AG04450 (cell line): ENCODE measurements at regions of chr9 and their contacts with region 1.

Region 1: GRCh38 chr9:115649991-115650472 is 503.6 kb upstream of the PAPPA start:
- DNase-seq: peak; percentile 87
- H3K4me3 ChIP-seq: peak overlapping the region; percentile 18
- H3K27ac ChIP-seq: peak overlapping the region; percentile 97
- H3K27me3 ChIP-seq: no peaks in the 10 kb centered on the region
- CTCF ChIP-seq: no peak

Region 2: DNA sequence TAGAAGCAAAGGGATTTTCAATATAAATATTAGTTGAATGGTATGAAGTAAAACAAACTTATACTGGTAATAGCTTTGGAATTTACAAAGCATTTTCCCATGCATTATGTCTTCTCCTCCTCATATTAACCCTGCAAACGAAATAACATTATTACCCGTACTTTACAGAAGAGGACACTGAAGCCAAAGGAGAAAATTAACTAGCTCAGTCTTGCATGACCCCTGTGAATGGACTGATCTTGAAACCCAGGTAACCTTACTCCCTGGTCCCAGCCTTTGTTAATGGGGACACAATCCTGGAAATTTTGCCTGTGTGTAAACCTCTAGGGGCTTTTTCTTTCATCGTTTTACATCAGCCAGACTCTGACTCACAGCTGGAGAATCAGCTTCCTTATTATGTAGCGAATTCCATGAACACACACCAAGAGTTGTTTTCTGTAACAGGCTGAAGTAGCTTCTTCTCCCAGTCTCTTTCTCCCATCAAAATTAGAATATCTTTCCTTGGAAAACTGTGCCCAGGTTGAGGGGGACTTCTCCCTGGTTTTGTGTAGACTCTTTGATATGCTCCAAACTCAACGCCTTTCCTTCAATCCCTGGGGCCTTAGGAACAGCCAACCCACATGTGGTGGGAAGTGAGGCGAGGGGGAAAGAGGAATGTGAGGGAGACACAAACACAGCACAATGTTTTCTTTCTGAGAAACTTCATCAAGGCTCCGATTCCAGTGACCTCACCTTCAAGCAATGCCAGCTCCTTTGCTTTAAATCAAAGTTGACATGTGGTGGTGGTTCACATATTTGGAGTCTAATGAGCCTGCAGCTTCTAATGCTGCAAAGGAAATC is 22.7 kb after region 1 on chr9:
- CTCF ChIA-PET with region 1: no interaction called
- POLR2A ChIA-PET with region 1: interaction called, 16 read pairs
- DNase-seq: peak; percentile 96
- H3K4me3 ChIP-seq: peak overlapping the region; percentile 5
- H3K27ac ChIP-seq: peak overlapping the region; percentile 100
- H3K27me3 ChIP-seq: no peaks in the 10 kb centered on the region
- CTCF ChIP-seq: 0 out of 2 replicates have a peak, but pooled peaks have one; percentile 6